ENCODE measurements at regions of chr10 and their contacts with region 1.

Region 1: DNA sequence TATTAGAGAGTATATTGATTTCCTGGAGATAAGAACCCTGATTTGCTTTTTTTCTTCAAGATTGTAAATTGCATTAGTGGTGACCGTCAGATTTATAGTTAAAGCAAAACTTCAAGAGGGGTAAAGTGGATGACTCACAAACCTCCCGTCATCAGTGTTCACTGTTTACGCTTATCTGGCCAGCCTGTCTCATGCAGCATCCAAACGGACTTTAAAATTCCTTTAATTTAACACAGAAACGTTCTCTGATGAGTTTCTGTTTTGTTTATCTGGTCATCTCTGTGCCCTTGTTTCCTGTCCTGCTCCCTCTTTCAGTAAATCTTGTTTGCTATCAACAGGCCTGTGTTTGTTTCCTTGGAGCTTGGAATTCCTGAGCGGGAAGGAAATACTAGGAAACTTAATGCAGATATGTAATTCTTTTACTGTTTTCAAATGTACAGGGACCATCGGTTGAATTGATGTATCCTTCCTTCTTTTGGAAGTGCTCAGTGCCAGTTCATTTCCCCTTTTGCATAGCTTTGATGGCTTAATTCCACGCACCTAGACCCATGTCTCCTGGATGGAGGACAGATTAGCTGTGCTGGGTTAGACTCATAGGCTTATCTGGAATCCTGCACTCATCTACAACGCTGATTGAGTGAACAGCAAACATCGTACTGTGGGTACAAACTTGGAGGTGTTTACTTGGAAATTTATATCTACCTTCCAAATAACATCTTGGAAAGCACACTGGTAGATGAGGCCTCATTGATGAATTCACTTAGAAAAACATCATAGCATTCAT is 21.3 kb downstream of the PTPRE start:
- DNase-seq: peak; percentile 82
- H3K4me3 ChIP-seq: peak overlapping the region in 1 of 3 experiments; percentile 23
- H3K27ac ChIP-seq: peak overlapping the region; percentile 84
- H3K4me1 ChIP-seq: peaks cover 41% of the 10 kb centered on the region
- H3K27me3 ChIP-seq: no peaks in the 10 kb centered on the region
- CTCF ChIP-seq: no peak
- POLR2A ChIP-seq: no peak

Region 2: GRCh38 chr10:127762925-127763324 is 165.3 kb before region 1 on chr10:
- CTCF ChIA-PET with region 1: no interaction called
- POLR2A ChIA-PET with region 1: no interaction called
- dilution Hi-C with region 1: no loop called
- intact Hi-C with region 1: no loop called
- DNase-seq: no peak
- H3K4me3 ChIP-seq: no peak overlapping the region
- H3K27ac ChIP-seq: no peak overlapping the region
- H3K4me1 ChIP-seq: no peaks in the 10 kb centered on the region
- H3K27me3 ChIP-seq: no peaks in the 10 kb centered on the region
- CTCF ChIP-seq: no peak
- POLR2A ChIP-seq: no peak

Region 3: GRCh38 chr10:127774766-127775559 is 153.3 kb before region 1 on chr10:
- CTCF ChIA-PET with region 1: no interaction called
- POLR2A ChIA-PET with region 1: no interaction called
- dilution Hi-C with region 1: no loop called
- intact Hi-C with region 1: no loop called
- DNase-seq: peak; percentile 13
- H3K4me3 ChIP-seq: no peak overlapping the region
- H3K27ac ChIP-seq: no peak overlapping the region
- H3K4me1 ChIP-seq: no peaks in the 10 kb centered on the region
- H3K27me3 ChIP-seq: no peaks in the 10 kb centered on the region
- CTCF ChIP-seq: no peak
- POLR2A ChIP-seq: no peak

Region 4: GRCh38 chr10:127939856-127940255 is 11.6 kb after region 1 on chr10:
- CTCF ChIA-PET with region 1: interaction called, 11 read pairs
- POLR2A ChIA-PET with region 1: no interaction called
- dilution Hi-C with region 1: no loop called
- intact Hi-C with region 1: loop called (anchors 1 kb)
- DNase-seq: no peak
- H3K4me3 ChIP-seq: no peak overlapping the region
- H3K27ac ChIP-seq: no peak overlapping the region
- H3K4me1 ChIP-seq: peaks cover 44% of the 10 kb centered on the region
- H3K27me3 ChIP-seq: no peaks in the 10 kb centered on the region
- CTCF ChIP-seq: no peak
- POLR2A ChIP-seq: no peak

Region 5: DNA sequence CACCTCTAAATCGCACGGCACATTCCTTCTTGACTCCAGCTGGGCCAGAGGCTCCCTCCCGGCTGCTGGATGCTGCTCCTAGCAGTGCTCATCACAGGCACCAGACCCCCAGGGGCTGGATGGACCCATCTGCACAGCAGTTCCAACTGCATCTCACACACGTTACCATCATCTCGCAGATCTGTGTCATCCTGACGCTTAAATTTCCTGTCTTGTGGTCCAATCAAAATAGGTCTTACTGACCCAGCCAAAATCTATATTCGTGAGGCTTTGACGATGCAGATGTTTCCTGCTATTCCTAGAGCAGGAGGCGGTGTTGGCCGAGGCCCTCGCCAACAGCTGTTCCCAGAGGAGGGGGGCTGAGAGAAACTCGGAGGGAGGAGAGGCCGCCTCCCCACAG is 90.0 kb after region 1 on chr10:
- CTCF ChIA-PET with region 1: no interaction called
- POLR2A ChIA-PET with region 1: no interaction called
- dilution Hi-C with region 1: no loop called
- intact Hi-C with region 1: no loop called
- DNase-seq: peak; percentile 73
- H3K4me3 ChIP-seq: no peak overlapping the region
- H3K27ac ChIP-seq: peak overlapping the region; percentile 54
- H3K4me1 ChIP-seq: peaks cover 3% of the 10 kb centered on the region
- H3K27me3 ChIP-seq: no peaks in the 10 kb centered on the region
- CTCF ChIP-seq: no peak
- POLR2A ChIP-seq: peak; percentile 11